Activated CD4-positive, alpha-beta T cell treated with anti-CD3 and anti-CD28 coated beads for 36 hours (primary cell): ENCODE measurements at regions of chr22 and their contacts with region 1.

Region 1: GRCh38 chr22:18024276-18024947 is at the start of gene MICAL3:
- DNase-seq: peak; percentile 78
- ATAC-seq: peak; percentile 97
- H3K4me3 Mint-ChIP-seq: peak within 1 kb of the TSS; percentile 73
- H3K27ac Mint-ChIP-seq: no peak within 1 kb of the TSS
- H3K4me1 Mint-ChIP-seq: peaks cover 11% of the 10 kb centered on the region
- H3K27me3 Mint-ChIP-seq: peaks cover 39% of the 10 kb centered on the region
- total RNA-seq, gene MICAL3: 21.9 to 22.5 TPM

Region 2: DNA sequence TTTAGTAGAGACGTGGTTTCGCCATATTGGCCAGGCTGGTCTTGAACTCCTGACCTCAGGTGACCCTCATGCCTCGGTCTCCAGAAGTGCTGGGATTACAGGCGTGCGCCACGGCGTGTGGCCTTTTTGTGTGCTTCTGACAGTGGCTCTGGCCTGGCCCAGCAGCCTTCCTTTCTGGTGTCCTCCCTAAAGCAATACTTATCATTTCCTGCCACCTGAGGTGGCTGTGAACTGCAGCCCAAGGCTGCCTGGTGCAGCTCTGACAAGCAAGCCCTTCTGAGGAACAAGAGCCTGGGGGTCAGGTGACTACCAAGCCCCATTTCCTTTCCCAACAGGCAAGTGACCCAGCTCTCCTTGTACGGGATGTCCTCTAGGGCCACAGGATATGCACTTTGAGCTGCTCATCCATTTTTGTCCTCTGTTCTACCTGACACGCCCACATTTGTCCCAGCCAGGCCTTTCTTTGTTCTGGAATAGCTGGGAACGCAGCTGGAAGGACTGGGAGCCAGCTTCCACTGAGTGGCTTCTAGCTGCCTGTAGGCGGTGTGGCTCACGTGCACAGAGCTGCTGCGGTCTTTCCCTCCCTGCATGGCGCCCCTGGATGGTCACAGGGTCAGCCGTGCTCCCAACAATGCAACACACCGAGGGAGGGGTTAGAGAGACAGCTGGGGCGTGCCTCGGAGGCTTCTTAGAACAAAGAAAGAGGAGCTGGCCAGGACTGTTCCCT is 237.8 kb before region 1 on chr22:
- CTCF ChIA-PET with region 1: no interaction called
- POLR2A ChIA-PET with region 1: no interaction called
- intact Hi-C with region 1: no loop called
- DNase-seq: no peak
- ATAC-seq: no peak
- H3K4me3 Mint-ChIP-seq: no peak overlapping the region
- H3K27ac Mint-ChIP-seq: no peak overlapping the region
- H3K4me1 Mint-ChIP-seq: peaks cover 9% of the 10 kb centered on the region
- H3K27me3 Mint-ChIP-seq: no peaks in the 10 kb centered on the region

Region 3: DNA sequence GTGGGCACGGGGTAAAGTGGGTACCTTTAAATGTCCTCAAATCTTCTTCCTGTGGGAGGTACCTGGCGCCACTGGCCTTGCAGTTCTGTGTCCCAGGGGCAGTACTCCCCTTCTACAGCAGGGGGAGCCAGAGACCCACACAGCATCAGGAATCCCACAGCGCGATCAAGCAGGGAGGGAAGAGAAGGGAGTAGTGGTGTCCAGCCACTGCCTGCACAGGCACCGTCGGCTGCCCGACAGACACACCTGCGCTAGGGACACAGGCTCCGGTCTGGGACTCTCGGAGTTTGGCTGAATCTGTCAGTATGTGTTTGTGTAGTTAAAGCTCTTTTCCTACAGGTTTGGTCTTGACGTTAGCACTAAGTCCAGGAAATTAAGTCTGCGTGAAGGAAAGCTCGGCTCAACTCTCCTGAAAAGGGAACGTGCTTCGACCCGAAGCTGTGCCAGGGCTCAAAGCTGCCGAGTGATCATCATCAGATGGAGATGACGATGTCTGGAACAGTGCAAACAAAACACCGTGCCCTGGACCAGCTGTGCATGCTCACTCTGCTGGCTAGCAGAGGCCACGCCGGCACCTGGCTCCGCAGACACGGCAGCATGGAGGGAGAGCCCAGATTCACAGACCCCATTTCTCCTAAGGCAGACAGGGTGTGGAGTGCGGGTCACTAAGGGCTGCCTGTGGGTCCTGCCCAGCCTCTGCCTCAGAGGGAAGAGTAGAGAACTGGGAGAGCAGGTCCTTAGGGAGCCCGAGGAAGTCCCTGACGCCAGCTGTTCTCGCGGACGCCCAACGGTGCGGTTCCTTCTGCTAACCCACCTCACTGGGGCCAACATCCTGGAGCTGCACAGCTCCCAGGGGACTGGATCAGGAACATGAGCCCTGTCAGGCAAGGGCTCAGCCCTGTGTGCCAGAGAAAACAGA is 194.1 kb before region 1 on chr22:
- CTCF ChIA-PET with region 1: interaction called, 14 read pairs
- POLR2A ChIA-PET with region 1: no interaction called
- intact Hi-C with region 1: loop called (anchors 1 kb)
- DNase-seq: peak; percentile 88
- ATAC-seq: peak; percentile 98
- H3K4me3 Mint-ChIP-seq: no peak overlapping the region
- H3K27ac Mint-ChIP-seq: no peak overlapping the region
- H3K4me1 Mint-ChIP-seq: peaks cover 7% of the 10 kb centered on the region
- H3K27me3 Mint-ChIP-seq: no peaks in the 10 kb centered on the region

Region 4: DNA sequence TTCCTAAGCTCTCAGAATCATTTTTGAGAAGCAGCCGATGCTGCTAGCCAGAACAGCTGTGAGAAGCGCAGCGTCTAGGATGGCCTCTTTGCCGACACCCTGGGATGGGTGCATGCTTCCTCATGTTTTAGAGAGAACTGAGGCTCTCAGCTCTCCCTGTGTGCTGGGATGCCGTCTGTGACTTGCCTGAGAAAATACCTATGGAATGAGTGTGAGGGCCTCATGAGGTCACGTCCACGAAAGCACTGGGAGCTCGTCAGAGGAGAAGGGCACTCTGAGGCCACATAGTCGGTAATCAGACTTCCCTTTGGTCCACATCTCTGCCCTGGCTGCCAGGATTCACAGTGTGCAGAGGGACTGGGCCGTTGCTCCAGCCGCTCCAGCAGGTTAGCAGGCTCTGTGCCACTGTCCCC is 54.7 kb before region 1 on chr22:
- CTCF ChIA-PET with region 1: interaction called, 5 read pairs
- POLR2A ChIA-PET with region 1: no interaction called
- intact Hi-C with region 1: loop called in 1 of 2 experiments (anchors 10 kb)
- DNase-seq: no peak
- ATAC-seq: no peak
- H3K4me3 Mint-ChIP-seq: no peak overlapping the region
- H3K27ac Mint-ChIP-seq: no peak overlapping the region
- H3K4me1 Mint-ChIP-seq: no peaks in the 10 kb centered on the region
- H3K27me3 Mint-ChIP-seq: no peaks in the 10 kb centered on the region

Region 5: GRCh38 chr22:18096823-18097222 is 72.4 kb after region 1 on chr22:
- CTCF ChIA-PET with region 1: no interaction called
- POLR2A ChIA-PET with region 1: no interaction called
- intact Hi-C with region 1: no loop called
- DNase-seq: peak; percentile 66
- ATAC-seq: peak; percentile 89
- H3K4me3 Mint-ChIP-seq: no peak overlapping the region
- H3K27ac Mint-ChIP-seq: peak overlapping the region; percentile 59
- H3K4me1 Mint-ChIP-seq: peaks cover 37% of the 10 kb centered on the region
- H3K27me3 Mint-ChIP-seq: no peaks in the 10 kb centered on the region